ENCODE measurements at regions of chr1 and their contacts with region 1.

Region 1: GRCh38 chr1:163933437-163933836 is 611.7 kb downstream of the NUF2 start:
- DNase-seq: no peak
- ATAC-seq: no peak
- H3K4me3 ChIP-seq: no peak overlapping the region
- H3K27ac ChIP-seq: no peak overlapping the region
- H3K4me1 ChIP-seq: peaks cover 0 to 6% (median 0%) of the 10 kb centered on the region in 9 donors
- H3K27me3 ChIP-seq: no peaks in the 10 kb centered on the region
- CTCF ChIP-seq: no peak

Region 2: GRCh38 chr1:163725551-163725950 is 207.9 kb before region 1 on chr1:
- intact Hi-C with region 1: no loop called
- DNase-seq: no peak
- ATAC-seq: no peak
- H3K4me3 ChIP-seq: no peak overlapping the region
- H3K27ac ChIP-seq: no peak overlapping the region
- H3K4me1 ChIP-seq: peaks cover 0 to 6% (median 0%) of the 10 kb centered on the region in 9 donors
- H3K27me3 ChIP-seq: no peaks in the 10 kb centered on the region
- CTCF ChIP-seq: no peak

Region 3: GRCh38 chr1:163875200-163875926 is 58.1 kb before region 1 on chr1:
- intact Hi-C with region 1: loop called in 1 of 10 experiments (anchors 2 kb)
- DNase-seq: peak; percentile 18 to 44
- ATAC-seq: peak; percentile 57 to 95 (median 86)
- H3K4me3 ChIP-seq: no peak overlapping the region
- H3K27ac ChIP-seq: peak overlapping the region in 9 of 10 donors; percentile 31 to 72 (median 61)
- H3K4me1 ChIP-seq: peaks cover 0 to 14% (median 0%) of the 10 kb centered on the region in 9 donors
- H3K27me3 ChIP-seq: no peaks in the 10 kb centered on the region
- CTCF ChIP-seq: no peak

Region 4: GRCh38 chr1:164823486-164824279 is 890.2 kb after region 1 on chr1:
- intact Hi-C with region 1: no loop called
- DNase-seq: peak in 1 of 2 donors; percentile 38
- ATAC-seq: peak; percentile 53 to 95 (median 88)
- H3K4me3 ChIP-seq: no peak overlapping the region
- H3K27ac ChIP-seq: peak overlapping the region in 9 of 10 donors; percentile 32 to 84 (median 70)
- H3K4me1 ChIP-seq: peaks cover 0 to 31% (median 16%) of the 10 kb centered on the region in 9 donors
- H3K27me3 ChIP-seq: no peaks in the 10 kb centered on the region
- CTCF ChIP-seq: peak in 3 of 9 donors; percentile 24 to 27 (median 27)

Measured in heart right ventricle (tissue), 16 donors.